OCI-LY7 (cell line): ENCODE measurements at regions of chr22 and their contacts with region 1.

Region 1: DNA sequence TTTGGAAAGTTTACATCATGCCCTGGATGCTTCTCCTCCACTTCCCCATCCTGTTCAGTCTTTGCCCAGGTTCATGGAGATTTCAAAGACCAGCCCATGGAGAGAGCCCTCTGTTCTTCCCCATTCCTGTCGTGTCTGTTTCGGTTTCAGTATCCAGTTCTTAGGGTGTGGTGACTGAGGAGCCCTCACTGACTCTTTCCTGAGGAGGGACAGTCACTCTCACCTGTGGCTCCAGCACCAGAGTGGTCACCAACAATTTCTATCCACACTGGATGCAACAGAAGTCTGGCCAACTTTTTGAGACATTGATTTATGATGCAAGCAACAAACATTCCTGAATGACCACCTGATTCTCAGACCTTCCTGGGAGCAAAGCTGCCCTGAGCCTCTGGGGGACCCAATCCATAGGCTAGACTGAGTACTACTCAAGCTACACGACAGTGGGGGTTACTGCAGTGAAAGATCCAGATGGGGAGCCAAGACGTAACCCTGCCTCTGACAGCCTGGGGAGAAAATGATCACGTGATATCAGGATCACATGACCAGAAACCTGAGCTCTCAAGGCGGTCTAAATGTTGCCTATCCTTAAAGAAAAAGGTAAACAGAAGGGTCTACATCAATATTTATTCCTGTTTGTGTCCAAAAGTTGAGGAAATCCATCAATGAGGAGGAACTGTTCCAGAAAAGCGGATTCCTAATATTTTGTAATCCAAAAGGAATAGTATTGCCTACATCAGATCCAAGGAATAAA is 76.2 kb upstream of the VPREB1 start:
- DNase-seq: peak; percentile 96
- H3K4me3 ChIP-seq: peak overlapping the region; percentile 69
- H3K27ac ChIP-seq: peak overlapping the region; percentile 99
- H3K4me1 ChIP-seq: peaks cover 84% of the 10 kb centered on the region
- CTCF ChIP-seq: no peak

Region 2: DNA sequence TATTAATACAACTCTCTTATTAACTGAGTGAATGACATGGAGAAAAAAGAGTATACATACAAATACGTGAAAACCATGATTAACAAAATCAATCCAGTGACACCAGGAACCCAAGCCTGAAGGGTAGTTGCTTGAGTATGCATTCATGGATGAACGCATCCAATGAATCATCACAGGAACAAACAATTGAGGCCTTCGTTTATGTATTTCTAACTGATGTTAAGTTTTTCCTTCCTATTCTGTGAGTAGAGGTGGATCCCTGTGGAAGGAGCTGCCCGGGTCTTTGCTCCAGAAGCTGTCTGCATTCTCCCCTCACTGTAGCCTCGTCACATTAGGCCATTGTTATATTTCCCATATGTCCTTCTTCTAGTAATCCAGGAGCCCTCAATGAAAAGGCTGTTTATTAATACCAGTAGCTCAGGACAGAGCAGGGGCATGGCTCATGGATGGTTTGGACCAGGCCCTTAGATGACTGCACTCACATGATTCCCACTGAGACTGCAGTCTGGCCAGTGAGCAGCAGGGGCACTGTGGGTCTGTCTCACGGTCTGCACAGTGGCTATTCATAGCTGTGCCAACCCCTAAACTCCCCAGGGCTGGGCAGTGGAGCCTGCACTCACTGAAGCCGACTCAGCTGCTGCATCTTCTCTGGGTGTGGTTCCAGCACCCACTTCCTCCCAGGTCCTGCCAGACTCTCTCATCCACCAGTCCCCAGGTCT is 57.7 kb before region 1 on chr22:
- CTCF ChIA-PET with region 1: interaction called, 3 read pairs
- POLR2A ChIA-PET with region 1: interaction called, 6 read pairs
- intact Hi-C with region 1: loop called (anchors 2 kb)
- DNase-seq: peak; percentile 95
- H3K4me3 ChIP-seq: peak overlapping the region; percentile 38
- H3K27ac ChIP-seq: peak overlapping the region; percentile 64
- H3K4me1 ChIP-seq: peaks cover 34% of the 10 kb centered on the region
- CTCF ChIP-seq: peak; percentile 89

Region 3: GRCh38 chr22:22125579-22126468 is 42.5 kb before region 1 on chr22:
- CTCF ChIA-PET with region 1: no interaction called
- POLR2A ChIA-PET with region 1: no interaction called
- intact Hi-C with region 1: no loop called
- DNase-seq: no peak
- H3K4me3 ChIP-seq: no peak overlapping the region
- H3K27ac ChIP-seq: no peak overlapping the region
- H3K4me1 ChIP-seq: peaks cover under 1% of the 10 kb centered on the region
- CTCF ChIP-seq: no peak

Region 4: DNA sequence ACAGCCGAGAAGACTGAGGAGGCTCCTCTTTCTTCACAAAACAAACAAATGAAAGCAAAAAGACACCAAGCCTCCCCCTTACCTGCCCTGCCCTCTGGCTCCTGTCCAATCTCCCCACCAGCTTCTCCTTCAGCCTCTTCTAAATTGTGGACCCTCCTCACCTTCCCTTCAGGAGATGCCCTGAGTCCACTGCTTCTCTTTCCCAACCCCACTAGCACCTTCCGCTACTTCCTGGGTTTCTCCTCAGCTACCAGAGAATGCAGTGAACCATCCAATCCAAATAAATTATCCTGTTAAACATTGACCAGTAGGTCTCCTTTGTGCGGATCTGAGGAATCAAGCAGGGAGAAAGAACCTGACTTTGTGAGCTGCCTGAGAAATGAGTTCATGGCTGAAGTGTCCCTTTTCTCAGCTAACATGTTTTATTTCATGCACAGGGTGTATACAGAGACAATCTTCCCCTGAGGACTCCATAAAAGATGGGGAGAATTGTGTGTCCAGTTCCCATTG is 13.0 kb after region 1 on chr22:
- CTCF ChIA-PET with region 1: interaction called, 5 read pairs
- POLR2A ChIA-PET with region 1: interaction called, 148 read pairs
- intact Hi-C with region 1: no loop called
- DNase-seq: no peak
- H3K4me3 ChIP-seq: no peak overlapping the region
- H3K27ac ChIP-seq: no peak overlapping the region
- H3K4me1 ChIP-seq: peaks cover 44% of the 10 kb centered on the region
- CTCF ChIP-seq: no peak

Region 5: DNA sequence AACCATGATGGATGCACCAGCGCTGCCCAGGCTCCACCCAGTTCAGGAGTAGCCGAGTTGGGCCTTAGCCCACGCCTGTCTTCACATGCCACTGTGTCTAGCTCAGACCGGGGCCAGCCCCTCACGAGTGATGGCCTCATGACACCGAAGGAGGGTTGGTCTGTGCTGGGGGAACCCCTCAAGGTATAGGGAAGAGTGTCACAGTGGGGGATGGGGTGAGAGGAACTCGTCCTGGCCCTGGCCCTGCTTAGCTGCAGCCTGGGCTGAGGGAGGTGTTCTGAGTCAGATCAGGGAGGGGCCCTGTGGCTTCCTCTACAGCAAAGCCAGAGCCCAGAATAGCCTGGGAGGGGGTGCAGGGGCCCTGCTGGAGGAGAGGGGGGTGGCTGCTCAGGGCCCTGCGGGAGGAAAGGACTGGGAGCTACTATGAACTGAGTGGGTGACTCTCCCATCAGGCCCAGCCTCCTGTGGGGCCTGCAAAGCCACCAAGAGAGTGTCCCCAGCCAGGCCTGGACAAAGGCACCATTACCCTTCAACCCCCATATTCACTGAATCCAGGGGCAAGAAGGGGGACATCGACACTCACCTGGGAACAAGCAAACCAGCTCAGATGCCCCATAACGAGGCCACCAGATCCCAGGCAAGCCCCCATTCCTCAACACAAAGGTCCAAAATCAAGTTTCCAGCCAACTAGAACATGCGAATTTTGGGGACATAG is 760.5 kb after region 1 on chr22:
- CTCF ChIA-PET with region 1: no interaction called
- POLR2A ChIA-PET with region 1: interaction called, 5 read pairs
- intact Hi-C with region 1: loop called (anchors 5 kb)
- DNase-seq: peak; percentile 85
- H3K4me3 ChIP-seq: peak overlapping the region; percentile 33
- H3K27ac ChIP-seq: peak overlapping the region; percentile 91
- H3K4me1 ChIP-seq: peaks cover 100% of the 10 kb centered on the region
- CTCF ChIP-seq: no peak